Sciatic nerve (tissue), 2 donors: ENCODE measurements at regions of chr16 and their contacts with region 1.

Region 1: DNA sequence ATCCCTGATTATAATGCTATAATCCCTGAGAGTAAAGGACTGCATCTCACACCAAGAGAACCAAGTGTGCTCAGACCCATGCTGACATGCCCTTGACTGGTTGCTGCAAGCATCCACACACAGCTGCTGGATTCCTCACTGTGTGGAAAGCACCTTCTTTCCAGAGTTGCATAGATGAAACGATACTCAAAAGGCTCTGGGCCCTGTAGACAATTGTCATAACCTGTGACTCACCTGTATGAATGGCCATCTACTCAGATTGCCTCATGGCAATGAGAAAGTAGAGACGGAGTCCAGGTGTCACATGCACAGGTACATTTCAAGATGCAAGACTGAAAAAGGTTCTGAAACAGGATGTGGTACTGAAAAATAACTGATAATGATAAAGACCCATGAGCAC is 58.1 kb downstream of the MPHOSPH6 start:
- DNase-seq: no peak
- ATAC-seq: no peak

Region 2: DNA sequence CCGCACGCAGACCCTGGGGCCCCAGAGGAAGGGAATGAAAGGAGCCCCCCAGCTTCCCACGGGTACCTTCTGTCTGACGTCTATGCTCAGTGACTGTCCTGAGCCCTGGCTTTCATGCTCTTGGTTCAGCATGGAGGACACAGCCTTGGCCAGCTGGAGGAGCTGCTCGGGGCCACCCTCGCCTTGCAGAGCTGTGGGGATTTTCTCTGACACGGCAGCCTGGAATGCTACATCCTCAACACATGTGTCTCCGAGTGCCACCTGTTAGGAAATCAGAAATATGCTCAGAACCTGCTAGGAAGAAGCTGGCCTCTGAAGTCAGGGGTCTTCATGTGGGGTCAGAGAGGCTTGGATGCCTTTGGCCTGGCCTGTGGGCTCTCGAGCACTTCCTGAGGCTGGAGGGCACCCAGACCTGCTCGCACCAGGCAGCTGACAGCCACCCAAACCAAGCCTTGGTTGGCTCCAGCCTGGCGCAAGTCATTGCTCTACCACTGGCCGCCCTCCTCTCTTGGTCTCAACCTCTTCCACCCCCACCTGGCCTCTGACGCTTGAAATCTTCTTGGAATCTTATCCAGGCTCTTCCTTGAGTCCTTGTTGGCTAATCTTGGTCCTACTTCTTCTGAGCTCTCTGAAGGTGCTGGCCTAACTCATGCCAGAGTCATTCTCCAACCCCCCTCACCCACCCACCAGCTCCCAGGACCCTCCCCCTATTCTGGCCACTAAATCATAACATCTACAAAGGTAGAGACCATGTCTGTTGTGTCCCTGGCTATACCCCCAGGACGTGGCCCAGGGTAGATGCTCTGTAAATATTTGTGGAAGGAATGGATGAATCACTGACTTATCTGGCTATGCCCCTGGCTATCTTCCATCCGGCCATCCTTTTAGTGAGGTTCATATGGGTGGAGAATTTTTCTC is 937.0 kb before region 1 on chr16:
- intact Hi-C with region 1: loop called (anchors 10 kb)
- DNase-seq: no peak
- ATAC-seq: no peak

Region 3: GRCh38 chr16:82524976-82525375 is 413.0 kb after region 1 on chr16:
- intact Hi-C with region 1: no loop called
- DNase-seq: no peak
- ATAC-seq: no peak